CD4-positive, alpha-beta T cell (primary cell): ENCODE measurements at regions of chr17 and their contacts with region 1.

Region 1: GRCh38 chr17:32461853-32462617 is 17.7 kb downstream of the PSMD11 start:
- DNase-seq: peak; percentile 42 to 83 (median 60)
- ATAC-seq: peak; percentile 89
- H3K4me3 ChIP-seq: no peak overlapping the region
- H3K4me3 Mint-ChIP-seq: no peak overlapping the region
- H3K27ac ChIP-seq: no peak overlapping the region
- H3K27ac Mint-ChIP-seq: peak overlapping the region; percentile 34
- H3K4me1 ChIP-seq: no peaks in the 10 kb centered on the region
- H3K4me1 Mint-ChIP-seq: peaks cover 36% of the 10 kb centered on the region
- H3K27me3 ChIP-seq: no peaks in the 10 kb centered on the region
- H3K27me3 Mint-ChIP-seq: no peaks in the 10 kb centered on the region
- CTCF ChIP-seq: peak; percentile 69

Region 2: DNA sequence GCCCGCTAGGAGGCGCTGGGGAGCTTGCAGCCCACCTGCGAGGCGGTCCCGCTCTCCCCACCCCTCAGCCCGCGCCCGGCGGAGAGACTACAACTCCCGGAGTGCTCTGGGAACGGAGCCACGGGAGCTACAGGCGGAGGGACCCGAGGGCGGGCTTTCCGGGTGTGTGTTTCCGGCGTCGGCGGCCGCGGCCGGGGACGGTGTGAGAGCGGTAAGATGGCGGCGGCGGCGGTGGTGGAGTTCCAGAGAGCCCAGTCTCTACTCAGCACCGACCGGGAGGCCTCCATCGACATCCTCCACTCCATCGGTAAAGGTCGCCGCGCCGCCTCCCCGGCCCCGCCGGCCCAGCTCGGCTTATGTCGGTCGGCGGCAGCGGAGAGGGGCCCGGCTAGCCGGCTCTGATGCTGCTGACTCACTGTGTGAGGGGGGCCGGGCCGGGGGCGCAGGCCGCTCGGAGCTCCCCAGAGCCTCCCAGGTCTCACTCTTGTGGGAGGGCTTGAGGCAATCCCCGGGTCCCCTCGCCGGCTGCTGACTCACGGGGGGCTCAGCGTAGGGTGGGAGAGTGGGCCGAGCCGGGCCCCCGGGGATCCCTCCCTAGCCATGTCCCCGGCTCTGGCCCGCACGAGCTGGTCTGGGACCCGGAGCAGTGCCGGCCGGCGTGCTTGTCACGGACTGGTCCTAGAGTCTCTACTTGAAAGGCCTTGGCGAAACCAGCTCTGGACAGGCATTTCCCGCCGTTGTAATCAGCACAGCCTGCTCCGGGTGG is 17.5 kb before region 1 on chr17 and contains the start of gene PSMD11:
- CTCF ChIA-PET with region 1: interaction called, 37 read pairs
- POLR2A ChIA-PET with region 1: interaction called, 4 read pairs
- intact Hi-C with region 1: no loop called
- DNase-seq: peak; percentile 98 to 99 (median 99)
- ATAC-seq: peak; percentile 97
- H3K4me3 ChIP-seq: peak within 1 kb of the TSS; percentile 92
- H3K4me3 Mint-ChIP-seq: peak within 1 kb of the TSS; percentile 90
- H3K27ac ChIP-seq: peak within 1 kb of the TSS; percentile 46 to 63
- H3K27ac Mint-ChIP-seq: peak within 1 kb of the TSS; percentile 18
- H3K4me1 ChIP-seq: peaks cover 17% of the 10 kb centered on the region
- H3K4me1 Mint-ChIP-seq: peaks cover 39% of the 10 kb centered on the region
- H3K27me3 ChIP-seq: no peaks in the 10 kb centered on the region
- H3K27me3 Mint-ChIP-seq: no peaks in the 10 kb centered on the region
- CTCF ChIP-seq: peak; percentile 23
- total RNA-seq, gene PSMD11: 67.6 to 68.7 TPM

Region 3: DNA sequence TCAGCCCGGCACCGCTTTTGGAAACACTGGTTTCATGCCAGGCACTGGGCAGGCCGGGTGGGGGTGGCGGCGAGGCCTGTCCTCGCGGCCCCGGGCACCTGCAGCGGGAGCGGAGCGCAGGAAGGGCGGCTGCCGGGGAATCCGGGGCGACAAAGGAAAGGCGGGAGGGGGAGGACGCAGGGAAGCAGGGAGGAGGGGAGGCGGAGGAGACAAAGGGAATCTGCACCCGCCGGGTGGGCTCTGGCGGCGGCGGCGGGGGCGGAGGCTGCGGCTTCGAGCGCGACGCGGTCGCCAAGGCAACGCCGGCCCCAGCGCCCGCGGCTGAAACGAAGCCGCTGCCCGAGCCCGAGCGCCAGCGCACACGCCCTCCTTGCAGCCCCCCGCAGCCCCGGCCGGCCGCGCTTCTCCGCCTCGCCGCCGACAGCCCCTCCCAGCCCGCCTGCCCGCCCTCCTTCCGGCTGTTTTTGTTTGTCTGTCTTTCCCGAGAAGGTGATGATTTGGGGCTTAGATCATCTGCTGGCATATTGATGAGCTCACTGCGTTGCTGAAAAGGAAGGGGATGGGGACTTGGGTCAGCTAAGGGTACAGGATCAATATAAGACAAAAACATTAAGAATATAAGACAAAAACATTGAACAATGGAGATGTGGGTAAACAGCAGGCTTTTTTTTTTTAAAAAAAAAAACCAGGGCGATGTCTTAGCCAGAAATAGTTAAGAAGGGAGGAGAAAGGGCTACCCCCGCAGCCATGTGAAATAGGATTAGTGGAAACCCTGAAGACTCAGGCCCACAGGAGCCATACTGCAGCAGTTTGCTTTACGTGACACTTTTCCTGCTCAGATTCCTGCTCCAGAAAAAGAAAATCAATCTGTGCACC is 57.4 kb after region 1 on chr17:
- CTCF ChIA-PET with region 1: interaction called, 17 read pairs
- POLR2A ChIA-PET with region 1: no interaction called
- intact Hi-C with region 1: no loop called
- DNase-seq: peak in 13 of 14 experiments; percentile 60 to 87 (median 76)
- ATAC-seq: peak; percentile 49
- H3K4me3 ChIP-seq: peak overlapping the region; percentile 43
- H3K4me3 Mint-ChIP-seq: peak overlapping the region; percentile 83
- H3K27ac ChIP-seq: peak overlapping the region; percentile 84
- H3K27ac Mint-ChIP-seq: peak overlapping the region; percentile 87
- H3K4me1 ChIP-seq: peaks cover 65% of the 10 kb centered on the region
- H3K4me1 Mint-ChIP-seq: peaks cover 85% of the 10 kb centered on the region
- H3K27me3 ChIP-seq: no peaks in the 10 kb centered on the region
- H3K27me3 Mint-ChIP-seq: no peaks in the 10 kb centered on the region
- CTCF ChIP-seq: no peak

Region 4: DNA sequence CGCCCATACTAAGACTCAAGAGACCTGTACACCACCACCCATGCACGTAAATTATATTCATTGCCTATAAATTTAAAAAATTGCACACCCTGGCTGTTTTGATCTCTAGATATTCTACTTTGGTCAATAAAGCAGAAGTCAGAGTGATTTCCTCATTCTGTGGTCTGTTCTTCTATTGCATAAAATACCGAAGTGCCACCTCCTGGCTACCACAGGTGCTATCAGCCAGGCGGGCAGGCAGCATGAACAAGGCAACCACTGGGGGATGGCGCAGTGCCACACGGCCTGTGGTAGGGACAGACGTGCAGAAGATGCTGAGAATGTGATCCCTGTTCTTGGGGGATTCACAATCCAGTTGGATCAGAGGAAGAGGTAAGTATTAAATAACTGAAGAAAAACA is 147.1 kb after region 1 on chr17:
- CTCF ChIA-PET with region 1: interaction called, 5 read pairs
- POLR2A ChIA-PET with region 1: interaction called, 3 read pairs
- intact Hi-C with region 1: loop called (anchors 1 kb)
- DNase-seq: peak; percentile 58 to 85 (median 70)
- ATAC-seq: peak; percentile 100
- H3K4me3 ChIP-seq: no peak overlapping the region
- H3K4me3 Mint-ChIP-seq: no peak overlapping the region
- H3K27ac ChIP-seq: no peak overlapping the region
- H3K27ac Mint-ChIP-seq: no peak overlapping the region
- H3K4me1 ChIP-seq: no peaks in the 10 kb centered on the region
- H3K4me1 Mint-ChIP-seq: peaks cover 6% of the 10 kb centered on the region
- H3K27me3 ChIP-seq: no peaks in the 10 kb centered on the region
- H3K27me3 Mint-ChIP-seq: no peaks in the 10 kb centered on the region
- CTCF ChIP-seq: peak; percentile 83

Region 5: DNA sequence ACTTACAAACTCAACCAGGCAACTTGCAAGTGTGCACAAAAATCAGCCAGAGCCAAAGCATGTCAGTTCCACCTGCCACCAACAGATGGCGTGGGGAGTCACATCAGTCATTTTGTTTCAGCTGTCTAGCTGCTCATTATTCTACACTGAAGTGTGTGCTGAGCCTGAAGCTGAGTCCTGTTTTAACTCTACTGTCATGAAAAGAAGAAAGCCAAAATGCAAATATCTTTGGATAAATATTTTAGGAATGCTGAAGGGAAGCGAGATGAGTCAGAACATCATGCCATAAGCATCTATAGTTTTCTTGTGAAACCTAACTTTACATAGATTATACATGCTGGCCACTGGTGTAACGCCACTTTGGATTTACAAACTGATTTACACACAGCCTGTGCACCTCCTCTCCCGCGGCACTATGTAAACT is 197.4 kb after region 1 on chr17:
- CTCF ChIA-PET with region 1: interaction called, 3 read pairs
- POLR2A ChIA-PET with region 1: no interaction called
- intact Hi-C with region 1: loop called in 1 of 2 experiments (anchors 1 kb)
- DNase-seq: peak; percentile 24 to 77 (median 56)
- ATAC-seq: peak; percentile 58
- H3K4me3 ChIP-seq: no peak overlapping the region
- H3K4me3 Mint-ChIP-seq: no peak overlapping the region
- H3K27ac ChIP-seq: no peak overlapping the region
- H3K27ac Mint-ChIP-seq: no peak overlapping the region
- H3K4me1 ChIP-seq: no peaks in the 10 kb centered on the region
- H3K4me1 Mint-ChIP-seq: no peaks in the 10 kb centered on the region
- H3K27me3 ChIP-seq: no peaks in the 10 kb centered on the region
- H3K27me3 Mint-ChIP-seq: no peaks in the 10 kb centered on the region
- CTCF ChIP-seq: peak; percentile 99

Region 6: GRCh38 chr17:32755045-32755805 is 293.2 kb after region 1 on chr17:
- CTCF ChIA-PET with region 1: interaction called, 15 read pairs
- POLR2A ChIA-PET with region 1: no interaction called
- intact Hi-C with region 1: loop called in 1 of 2 experiments (anchors 2 kb)
- DNase-seq: peak in 3 of 14 experiments; percentile 70 to 73 (median 72)
- ATAC-seq: peak; percentile 82
- H3K4me3 ChIP-seq: no peak overlapping the region
- H3K4me3 Mint-ChIP-seq: no peak overlapping the region
- H3K27ac ChIP-seq: no peak overlapping the region
- H3K27ac Mint-ChIP-seq: no peak overlapping the region
- H3K4me1 ChIP-seq: no peaks in the 10 kb centered on the region
- H3K4me1 Mint-ChIP-seq: peaks cover 13% of the 10 kb centered on the region
- H3K27me3 ChIP-seq: no peaks in the 10 kb centered on the region
- H3K27me3 Mint-ChIP-seq: no peaks in the 10 kb centered on the region
- CTCF ChIP-seq: peak; percentile 56

Region 7: GRCh38 chr17:32769839-32770238 is 307.8 kb after region 1 on chr17:
- CTCF ChIA-PET with region 1: no interaction called
- POLR2A ChIA-PET with region 1: no interaction called
- intact Hi-C with region 1: no loop called
- DNase-seq: no peak
- ATAC-seq: no peak
- H3K4me3 ChIP-seq: no peak overlapping the region
- H3K4me3 Mint-ChIP-seq: no peak overlapping the region
- H3K27ac ChIP-seq: no peak overlapping the region
- H3K27ac Mint-ChIP-seq: no peak overlapping the region
- H3K4me1 ChIP-seq: no peaks in the 10 kb centered on the region
- H3K4me1 Mint-ChIP-seq: no peaks in the 10 kb centered on the region
- H3K27me3 ChIP-seq: no peaks in the 10 kb centered on the region
- H3K27me3 Mint-ChIP-seq: no peaks in the 10 kb centered on the region
- CTCF ChIP-seq: no peak